ENCODE measurements at regions of chr17 and their contacts with region 1.

Region 1: GRCh38 chr17:42618442-42619150 is 9.1 kb downstream of the TUBG1 start:
- DNase-seq: peak; percentile 76 to 91
- ATAC-seq: peak; percentile 97 to 98 (median 98)
- H3K4me3 ChIP-seq: peak overlapping the region; percentile 34
- H3K27ac ChIP-seq: peak overlapping the region; percentile 88
- H3K4me1 ChIP-seq: peaks cover 33% of the 10 kb centered on the region
- H3K27me3 ChIP-seq: no peaks in the 10 kb centered on the region
- CTCF ChIP-seq: peak; percentile 18

Region 2: DNA sequence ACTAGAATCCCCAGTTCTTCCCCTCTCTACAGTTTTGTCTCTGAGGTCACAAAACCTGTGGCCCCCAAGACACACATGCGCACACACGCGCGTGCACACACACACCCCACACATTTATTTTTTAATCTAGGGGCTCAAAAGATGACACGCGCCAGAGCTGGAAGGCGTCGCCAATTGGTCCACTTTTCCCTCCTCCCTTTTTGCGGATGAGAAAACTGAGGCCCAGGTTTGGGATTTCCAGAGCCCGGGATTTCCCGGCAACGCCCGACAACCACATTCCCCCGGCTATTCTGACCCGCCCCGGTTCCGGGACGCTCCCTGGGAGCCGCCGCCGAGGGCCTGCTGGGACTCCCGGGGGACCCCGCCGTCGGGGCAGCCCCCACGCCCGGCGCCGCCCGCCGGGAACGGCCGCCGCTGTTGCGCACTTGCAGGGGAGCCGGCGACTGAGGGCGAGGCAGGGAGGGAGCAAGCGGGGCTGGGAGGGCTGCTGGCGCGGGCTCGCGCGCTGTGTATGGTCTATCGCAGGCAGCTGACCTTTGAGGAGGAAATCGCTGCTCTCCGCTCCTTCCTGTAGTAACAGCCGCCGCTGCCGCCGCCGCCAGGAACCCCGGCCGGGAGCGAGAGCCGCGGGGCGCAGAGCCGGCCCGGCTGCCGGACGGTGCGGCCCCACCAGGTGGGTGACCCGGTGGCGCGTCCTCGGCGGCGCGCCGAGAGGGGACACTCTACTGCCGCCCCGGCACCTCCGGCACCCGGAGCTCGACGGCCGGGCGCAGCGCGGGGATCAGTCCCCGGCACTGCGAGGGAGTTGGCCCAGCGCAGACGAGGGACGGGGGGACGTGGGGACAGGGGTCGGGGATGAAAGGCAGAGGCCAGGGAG is 330.4 kb before region 1 on chr17 and contains the start of gene STAT5A:
- intact Hi-C with region 1: no loop called
- DNase-seq: peak; percentile 92 to 96
- ATAC-seq: peak; percentile 88 to 96 (median 90)
- H3K4me3 ChIP-seq: peak within 1 kb of the TSS; percentile 75
- H3K27ac ChIP-seq: peak within 1 kb of the TSS; percentile 87
- H3K4me1 ChIP-seq: peaks cover 13% of the 10 kb centered on the region
- H3K27me3 ChIP-seq: no peaks in the 10 kb centered on the region
- CTCF ChIP-seq: no peak
- total RNA-seq, gene STAT5A: 17.3 to 31.5 (median 23.9) TPM

Region 3: GRCh38 chr17:42667123-42667951 is 48.7 kb after region 1 on chr17:
- intact Hi-C with region 1: loop called (anchors 2 to 5 kb)
- DNase-seq: peak; percentile 70 to 84
- ATAC-seq: peak; percentile 87 to 89 (median 88)
- H3K4me3 ChIP-seq: no peak overlapping the region
- H3K27ac ChIP-seq: peak overlapping the region; percentile 73
- H3K4me1 ChIP-seq: peaks cover 31% of the 10 kb centered on the region
- H3K27me3 ChIP-seq: no peaks in the 10 kb centered on the region
- CTCF ChIP-seq: no peak

Region 4: GRCh38 chr17:42704837-42705494 is 86.4 kb after region 1 on chr17:
- intact Hi-C with region 1: no loop called
- DNase-seq: no peak
- ATAC-seq: no peak
- H3K4me3 ChIP-seq: no peak overlapping the region
- H3K27ac ChIP-seq: no peak overlapping the region
- H3K4me1 ChIP-seq: no peaks in the 10 kb centered on the region
- H3K27me3 ChIP-seq: no peaks in the 10 kb centered on the region
- CTCF ChIP-seq: no peak

Measured in psoas muscle (tissue), 8 donors.